HepG2 (cell line): ENCODE measurements at regions of chr1 and their contacts with region 1.

Region 1: GRCh38 chr1:6743189-6744101 is 41.8 kb upstream of the CAMTA1 start:
- DNase-seq: no peak
- ATAC-seq: peak; percentile 69
- H3K4me3 ChIP-seq: no peak overlapping the region
- H3K27ac ChIP-seq: no peak overlapping the region
- H3K4me1 ChIP-seq: no peaks in the 10 kb centered on the region
- H3K27me3 ChIP-seq: peaks cover 0 to 4% of the 10 kb centered on the region in 2 experiments; a peak in 1 of 5 replicates
- CTCF ChIP-seq: no peak
- EP300 ChIP-seq: no peak
- POLR2A ChIP-seq: no peak
- RAD21 ChIP-seq: no peak

Region 2: GRCh38 chr1:6701437-6702153 is 41.9 kb before region 1 on chr1 and contains the start of gene DNAJC11:
- CTCF ChIA-PET with region 1: no interaction called
- POLR2A ChIA-PET with region 1: no interaction called
- in situ Hi-C with region 1: no loop called
- intact Hi-C with region 1: no loop called
- DNase-seq: peak; percentile 80
- ATAC-seq: peak; percentile 91
- H3K4me3 ChIP-seq: peak within 1 kb of the TSS; percentile 93 to 99 (median 99)
- H3K27ac ChIP-seq: peak within 1 kb of the TSS; percentile 96
- H3K4me1 ChIP-seq: peaks cover 23% of the 10 kb centered on the region
- H3K27me3 ChIP-seq: no peaks in the 10 kb centered on the region; a peak in 1 of 5 replicates
- CTCF ChIP-seq: peak; percentile 87
- EP300 ChIP-seq: peak in 1 of 2 experiments; percentile 54; a peak in 1 of 4 replicates
- POLR2A ChIP-seq: peak; percentile 79 to 95
- RAD21 ChIP-seq: peak; percentile 48
- total RNA-seq, gene DNAJC11: 47.6 and 56.8 TPM in 2 replicates

Region 3: GRCh38 chr1:6801966-6802365 is 58.5 kb after region 1 on chr1:
- CTCF ChIA-PET with region 1: no interaction called
- POLR2A ChIA-PET with region 1: no interaction called
- in situ Hi-C with region 1: loop called (anchors 10 kb)
- intact Hi-C with region 1: no loop called
- DNase-seq: no peak
- ATAC-seq: no peak
- H3K4me3 ChIP-seq: no peak overlapping the region
- H3K27ac ChIP-seq: no peak overlapping the region
- H3K4me1 ChIP-seq: peaks cover 14% of the 10 kb centered on the region
- H3K27me3 ChIP-seq: no peaks in the 10 kb centered on the region
- CTCF ChIP-seq: no peak
- EP300 ChIP-seq: no peak
- POLR2A ChIP-seq: no peak
- RAD21 ChIP-seq: no peak